Sciatic nerve (tissue), 2 donors: ENCODE measurements at regions of chr10 and their contacts with region 1.

Region 1: DNA sequence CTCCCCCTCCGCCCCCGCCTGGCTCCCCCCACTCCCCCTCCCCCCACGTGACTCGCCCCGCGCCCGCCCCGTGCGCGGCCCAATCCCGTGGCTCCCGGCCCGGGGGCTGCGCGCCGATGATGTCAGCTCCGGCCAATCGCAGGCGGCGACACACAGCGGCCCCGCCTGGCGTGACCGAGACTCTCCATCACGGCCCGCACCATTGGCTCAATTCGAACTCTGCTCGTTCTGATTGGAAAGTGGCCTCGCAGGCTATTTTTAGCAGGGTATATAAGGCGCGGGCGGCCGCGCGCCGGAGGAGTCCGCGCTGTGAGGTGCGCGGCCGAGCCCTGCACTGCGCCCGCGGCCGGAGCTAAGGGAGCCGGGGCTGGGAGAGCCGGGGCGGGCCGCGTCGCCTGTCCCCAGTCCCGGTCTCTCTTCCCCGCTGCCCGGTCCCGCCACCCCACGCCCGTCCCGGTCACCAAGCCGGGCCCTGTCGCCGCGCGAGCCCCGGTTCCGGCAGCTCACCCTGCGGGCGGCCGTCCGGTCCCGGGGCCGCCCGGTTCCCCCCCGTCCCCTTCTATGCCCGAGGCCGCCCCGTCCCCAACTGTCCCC is 345 bp upstream of the KLF6 start:
- DNase-seq: peak; percentile 100
- ATAC-seq: peak; percentile 86

Region 2: GRCh38 chr10:3467052-3467951 is 318.1 kb before region 1 on chr10:
- intact Hi-C with region 1: loop called (anchors 5 kb)
- DNase-seq: peak; percentile 89
- ATAC-seq: peak; percentile 85

Region 3: GRCh38 chr10:4429571-4429970 is 644.2 kb after region 1 on chr10:
- intact Hi-C with region 1: no loop called
- DNase-seq: no peak
- ATAC-seq: no peak

Region 4: GRCh38 chr10:4656576-4657182 is 871.3 kb after region 1 on chr10:
- intact Hi-C with region 1: loop called (anchors 5 kb)
- DNase-seq: no peak
- ATAC-seq: peak; percentile 67

Region 5: DNA sequence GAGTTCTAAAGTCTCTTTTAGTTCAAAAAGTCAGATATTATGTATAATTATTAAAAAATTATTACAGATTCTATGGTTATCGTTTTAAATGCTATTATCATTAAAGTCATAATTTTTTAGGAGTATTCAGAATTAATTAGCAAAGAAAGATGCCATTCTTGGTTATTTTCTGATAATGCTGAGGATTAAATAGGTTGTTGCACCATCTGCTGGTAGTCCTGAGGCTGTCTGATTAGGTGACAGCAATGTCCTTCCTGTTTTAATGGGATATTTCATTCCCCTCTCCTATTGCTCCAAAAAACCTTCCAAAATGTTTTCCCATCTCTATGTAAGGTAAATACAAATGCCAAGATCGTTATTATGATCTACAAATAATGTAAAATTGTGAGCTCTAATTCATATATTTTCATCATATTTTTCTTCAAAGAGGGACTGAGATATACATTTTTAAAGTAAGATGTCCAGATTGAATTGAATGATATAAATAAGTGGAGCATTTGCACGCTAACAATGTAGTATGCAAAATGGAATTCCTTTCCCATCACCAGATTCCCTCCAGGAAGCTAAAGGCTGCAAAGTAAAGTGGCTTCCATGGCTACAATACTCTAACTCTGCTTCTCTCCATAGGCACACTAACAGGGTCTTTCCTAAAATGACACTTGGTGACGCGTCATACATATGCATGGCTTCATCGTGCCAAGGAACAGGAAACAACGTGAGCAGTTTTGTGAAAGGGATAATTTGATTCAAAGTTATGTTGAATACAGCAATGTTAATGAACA is 981.9 kb after region 1 on chr10:
- intact Hi-C with region 1: loop called (anchors 5 kb)
- DNase-seq: no peak
- ATAC-seq: peak; percentile 73